Activated CD4-positive, alpha-beta T cell treated with anti-CD3 and anti-CD28 coated beads, Interleukin-2, amount 10 ng/mL, durations not matched to agents 24 days and 14 days (primary cell): ENCODE measurements at regions of chr12 and their contacts with region 1.

Region 1: DNA sequence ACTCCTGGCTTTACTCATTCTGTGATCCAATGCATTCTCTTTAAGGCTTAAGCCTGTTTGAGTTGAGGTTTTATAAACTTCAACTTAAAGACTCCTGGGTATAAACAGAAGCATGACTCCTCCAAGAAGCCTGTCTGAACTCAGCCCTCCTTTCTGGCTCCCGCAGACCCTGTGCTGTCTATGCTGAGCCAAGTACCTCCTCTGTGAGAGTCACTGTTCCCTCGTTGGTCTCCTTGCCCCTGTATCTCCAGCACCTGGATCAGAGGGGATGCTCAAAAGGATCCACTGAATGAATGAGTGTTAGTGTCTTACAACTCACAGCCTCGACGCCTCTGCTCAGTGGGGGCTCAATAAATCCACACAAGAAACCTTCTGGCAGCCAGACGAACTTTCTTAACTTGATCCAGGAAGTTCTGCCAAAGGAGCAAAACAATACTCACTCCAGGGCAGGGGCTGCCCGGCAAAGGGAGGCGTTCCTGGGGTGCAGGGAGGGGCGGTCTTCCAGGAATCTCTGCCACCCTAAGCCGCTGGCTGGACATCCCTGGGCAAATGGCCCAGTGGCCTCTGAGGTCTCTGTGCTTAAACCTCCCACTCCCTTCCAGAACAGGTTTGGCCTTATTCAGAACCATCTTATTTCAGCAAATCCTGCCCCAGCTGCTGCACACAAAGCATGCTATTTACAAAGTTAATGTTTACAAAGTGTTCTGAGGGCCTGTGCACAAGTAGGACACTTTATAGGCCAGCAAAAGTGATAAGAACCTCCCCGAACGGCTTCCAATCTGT is 32.9 kb downstream of the MAP1LC3B2 start:
- DNase-seq: no peak
- H3K4me3 Mint-ChIP-seq: no peak overlapping the region
- H3K27ac Mint-ChIP-seq: no peak overlapping the region
- H3K4me1 Mint-ChIP-seq: peaks cover 30% of the 10 kb centered on the region
- H3K27me3 Mint-ChIP-seq: peaks cover 11% of the 10 kb centered on the region

Region 2: GRCh38 chr12:116406516-116406915 is 185.5 kb before region 1 on chr12:
- intact Hi-C with region 1: no loop called
- DNase-seq: no peak
- H3K4me3 Mint-ChIP-seq: no peak overlapping the region
- H3K27ac Mint-ChIP-seq: no peak overlapping the region
- H3K4me1 Mint-ChIP-seq: no peaks in the 10 kb centered on the region
- H3K27me3 Mint-ChIP-seq: no peaks in the 10 kb centered on the region

Region 3: DNA sequence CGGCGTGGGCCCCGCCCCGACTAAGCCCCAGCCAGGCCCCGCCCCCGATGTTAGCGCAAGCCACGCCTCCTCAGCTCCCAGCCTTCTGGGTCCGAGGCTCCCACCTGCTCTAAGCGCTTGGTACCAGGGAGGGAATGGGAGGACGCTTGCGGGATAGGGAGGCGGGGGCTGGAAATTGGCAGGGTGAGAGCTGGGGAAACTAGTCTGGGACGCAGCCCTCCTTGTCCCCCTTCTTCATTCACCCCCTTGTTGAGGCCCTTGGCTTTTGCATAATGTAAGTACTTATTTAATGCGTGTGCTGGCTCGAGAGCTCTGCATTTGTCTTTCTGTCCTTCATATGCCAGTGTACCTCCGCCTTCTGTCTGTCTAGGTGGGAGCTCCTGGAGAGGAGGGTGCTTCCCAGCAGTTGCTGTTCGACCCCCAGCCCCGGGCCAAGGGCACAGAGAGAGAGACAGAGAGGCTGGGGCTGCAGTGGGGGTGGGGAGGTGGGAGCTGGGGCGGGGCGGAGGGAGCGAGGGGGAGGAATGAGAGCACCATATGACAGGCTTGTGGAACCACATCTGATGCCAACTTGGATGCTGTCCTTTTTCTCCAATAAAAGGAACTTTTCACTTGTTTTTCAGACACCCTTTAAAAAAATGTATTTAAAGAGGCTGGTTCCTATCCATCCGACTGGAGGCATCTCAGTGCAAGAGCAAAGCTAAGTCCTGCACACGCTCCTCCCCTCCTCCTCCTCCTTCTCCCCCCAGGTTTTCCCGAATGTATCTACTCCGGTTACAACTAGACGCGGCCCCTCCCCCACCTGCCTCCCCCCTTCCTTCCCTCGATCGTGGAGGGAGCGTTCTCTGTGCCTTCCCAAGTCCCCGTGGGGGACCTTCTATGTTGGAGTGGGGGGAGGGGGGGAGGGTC is 58.4 kb before region 1 on chr12:
- intact Hi-C with region 1: loop called (anchors 5 kb)
- DNase-seq: peak; percentile 92
- H3K4me3 Mint-ChIP-seq: peak overlapping the region; percentile 91
- H3K27ac Mint-ChIP-seq: peak overlapping the region; percentile 67
- H3K4me1 Mint-ChIP-seq: peaks cover 37% of the 10 kb centered on the region
- H3K27me3 Mint-ChIP-seq: peaks cover 9% of the 10 kb centered on the region

Region 4: DNA sequence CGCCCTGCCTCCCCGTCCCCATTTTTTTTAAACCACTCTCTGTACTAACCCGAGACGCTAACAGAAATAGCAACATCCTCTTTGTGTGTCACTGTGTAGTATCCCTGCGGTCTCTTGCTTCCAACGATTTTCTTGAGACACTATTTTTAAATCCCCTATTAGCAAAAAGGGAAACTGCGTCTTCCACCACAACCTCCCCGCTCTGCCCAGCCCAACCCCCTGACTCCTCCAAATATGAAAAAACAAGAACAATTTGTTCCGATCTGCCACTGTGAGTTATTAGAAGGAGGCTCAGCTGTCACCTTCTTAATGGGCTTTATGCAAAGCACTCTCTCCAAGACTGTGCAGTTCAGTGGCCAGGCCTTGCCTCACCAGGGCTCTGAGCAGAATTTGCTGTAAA is 43.4 kb after region 1 on chr12:
- intact Hi-C with region 1: no loop called
- DNase-seq: no peak
- H3K4me3 Mint-ChIP-seq: no peak overlapping the region
- H3K27ac Mint-ChIP-seq: no peak overlapping the region
- H3K4me1 Mint-ChIP-seq: no peaks in the 10 kb centered on the region
- H3K27me3 Mint-ChIP-seq: peaks cover 30% of the 10 kb centered on the region